Endothelial cell of umbilical vein (primary cell): ENCODE measurements at regions of chr17 and their contacts with region 1.

Region 1: GRCh38 chr17:75109407-75110233 is at the start of gene ARMC7:
- DNase-seq: peak; percentile 81
- H3K4me3 ChIP-seq: peak within 1 kb of the TSS; percentile 71 to 74 (median 73)
- H3K27ac ChIP-seq: no peak within 1 kb of the TSS
- H3K4me1 ChIP-seq: peaks cover 24% of the 10 kb centered on the region
- H3K27me3 ChIP-seq: no peaks in the 10 kb centered on the region
- CTCF ChIP-seq: no peak
- POLR2A ChIP-seq: peak; percentile 92
- total RNA-seq, gene ARMC7: 14.5 and 15.7 TPM in 2 replicates

Region 2: DNA sequence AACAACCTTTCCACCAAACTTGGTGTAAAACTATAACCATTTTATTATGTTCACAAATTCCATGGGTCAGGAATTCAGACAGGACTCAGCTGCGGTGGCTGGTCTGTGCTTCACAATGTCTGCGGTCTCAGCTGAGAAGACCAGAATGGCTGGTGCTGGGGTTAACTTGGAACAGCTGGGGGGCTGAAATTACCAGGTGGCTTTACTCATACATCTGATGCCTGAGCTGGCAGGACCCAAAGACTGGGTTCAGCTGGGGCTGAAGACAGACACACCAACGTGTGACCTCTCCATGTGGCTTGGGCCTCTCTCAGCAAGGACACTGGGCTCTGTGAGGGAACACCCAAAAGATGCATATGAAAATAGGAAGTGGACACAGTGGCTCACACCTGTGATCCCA is 131.4 kb before region 1 on chr17:
- CTCF ChIA-PET with region 1: no interaction called
- POLR2A ChIA-PET with region 1: no interaction called
- dilution Hi-C with region 1: no loop called
- intact Hi-C with region 1: no loop called
- DNase-seq: no peak
- H3K4me3 ChIP-seq: no peak overlapping the region
- H3K27ac ChIP-seq: no peak overlapping the region
- H3K4me1 ChIP-seq: peaks cover 11% of the 10 kb centered on the region
- H3K27me3 ChIP-seq: peaks cover 3 to 6% of the 10 kb centered on the region in 2 experiments
- CTCF ChIP-seq: no peak
- POLR2A ChIP-seq: no peak

Region 3: DNA sequence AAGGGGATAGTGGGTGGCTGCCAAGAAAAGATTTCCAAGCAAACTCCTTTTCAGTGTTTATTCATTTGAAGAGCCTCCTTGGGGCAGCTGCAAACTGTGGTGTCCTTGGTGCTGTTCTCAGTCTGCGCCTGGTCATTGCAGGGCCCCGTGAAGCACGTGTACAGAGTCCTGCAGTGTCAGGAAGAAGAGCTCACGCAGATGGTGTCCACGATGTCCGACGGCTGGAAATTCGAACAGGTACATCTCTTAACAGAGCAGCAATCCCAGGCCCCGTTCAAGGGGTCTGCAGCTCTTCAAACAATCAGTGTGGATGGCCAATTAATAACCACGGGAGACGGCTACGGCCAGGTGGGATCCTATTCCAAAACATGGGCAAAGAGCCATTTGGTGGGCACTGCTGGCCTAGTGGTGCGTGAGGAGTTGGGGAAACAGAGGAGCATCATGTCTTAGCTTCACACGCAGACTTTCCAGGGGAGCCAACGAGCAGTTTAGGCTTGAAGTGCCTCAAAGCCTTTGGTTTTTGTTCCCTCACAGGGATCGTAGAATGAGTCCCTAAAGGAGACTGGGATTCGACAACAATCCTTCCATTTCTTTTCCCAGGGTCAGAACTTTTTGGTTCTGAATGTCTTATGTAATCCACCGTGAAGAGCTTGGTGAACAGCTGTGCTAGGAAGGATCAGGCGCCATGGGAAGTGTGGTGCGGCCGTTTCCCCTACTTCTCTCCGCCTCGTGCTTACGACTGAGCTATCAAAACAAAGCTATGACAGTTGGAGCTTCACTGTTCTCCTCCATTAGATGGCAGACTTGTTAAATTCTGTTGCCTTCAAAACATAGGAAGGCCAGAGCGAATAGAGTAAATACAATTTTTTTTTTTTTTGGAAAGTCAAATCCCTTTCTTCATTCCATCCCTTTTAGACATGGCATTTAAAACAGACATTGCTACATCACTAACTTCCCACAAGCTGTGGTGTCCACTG is 50.0 kb before region 1 on chr17:
- CTCF ChIA-PET with region 1: interaction called, 80 read pairs
- POLR2A ChIA-PET with region 1: interaction called, 6 read pairs
- dilution Hi-C with region 1: no loop called
- intact Hi-C with region 1: no loop called
- DNase-seq: peak; percentile 77
- H3K4me3 ChIP-seq: no peak overlapping the region
- H3K27ac ChIP-seq: no peak overlapping the region
- H3K4me1 ChIP-seq: no peaks in the 10 kb centered on the region
- H3K27me3 ChIP-seq: no peaks in the 10 kb centered on the region
- CTCF ChIP-seq: peak; percentile 21 to 39
- POLR2A ChIP-seq: no peak

Region 4: DNA sequence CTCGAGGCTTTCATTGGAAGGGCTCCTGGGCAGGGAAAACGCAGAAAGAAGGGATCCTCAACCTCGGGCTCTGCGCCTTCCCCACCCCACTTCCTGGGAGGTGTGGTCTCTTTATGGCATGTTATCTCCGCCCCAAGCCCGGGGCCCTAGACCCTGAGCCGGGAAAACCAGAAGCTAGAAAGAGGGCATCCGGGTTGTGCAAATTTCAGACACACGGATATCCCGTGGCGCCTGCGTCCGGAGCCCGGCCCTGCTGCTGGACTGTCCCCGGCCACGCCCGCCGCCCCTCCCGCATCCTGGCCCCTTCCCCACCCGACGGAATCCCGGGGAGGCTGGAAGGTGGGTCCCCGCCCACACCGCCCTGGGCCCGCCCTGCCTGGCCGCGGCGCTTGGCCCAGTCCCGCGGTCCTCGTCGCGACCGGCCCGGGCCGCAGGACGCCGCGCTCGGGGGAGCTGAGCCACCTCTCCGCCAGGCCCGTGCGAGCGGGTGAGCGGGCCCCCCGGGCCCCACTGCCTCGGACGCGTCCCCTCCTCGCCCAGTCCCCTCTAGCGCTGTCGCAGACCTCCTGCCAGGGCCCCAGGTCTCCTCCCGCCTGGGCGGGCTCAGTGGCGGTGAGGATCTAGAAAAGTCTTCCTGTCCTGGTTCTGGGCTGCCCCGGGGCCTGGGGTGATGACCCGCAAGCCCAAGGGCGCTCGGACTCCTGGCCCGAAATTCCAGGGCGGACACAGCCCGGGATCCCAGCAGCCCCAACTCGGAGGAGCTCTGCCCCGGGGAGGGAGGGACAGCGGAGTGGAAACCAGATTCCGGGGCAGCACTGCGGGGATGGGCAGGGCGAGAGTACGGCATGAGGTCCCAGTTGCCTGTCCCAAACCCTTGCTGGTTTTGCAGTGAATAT is 21.8 kb before region 1 on chr17 and contains the start of gene SLC16A5:
- CTCF ChIA-PET with region 1: interaction called, 35 read pairs
- POLR2A ChIA-PET with region 1: interaction called, 3 read pairs
- dilution Hi-C with region 1: no loop called
- intact Hi-C with region 1: loop called (anchors 1 kb)
- DNase-seq: peak; percentile 81
- H3K4me3 ChIP-seq: peak within 1 kb of the TSS; percentile 23 to 52 (median 46)
- H3K27ac ChIP-seq: peak within 1 kb of the TSS; percentile 88
- H3K4me1 ChIP-seq: peaks cover 42% of the 10 kb centered on the region
- H3K27me3 ChIP-seq: no peaks in the 10 kb centered on the region
- CTCF ChIP-seq: no peak
- POLR2A ChIP-seq: peak; percentile 74
- total RNA-seq, gene SLC16A5: 16.4 and 17.4 TPM in 2 replicates

Region 5: GRCh38 chr17:75131280-75132017 is 21.8 kb after region 1 on chr17 and contains the start of gene NT5C:
- CTCF ChIA-PET with region 1: interaction called, 138 read pairs
- POLR2A ChIA-PET with region 1: interaction called, 5 read pairs
- dilution Hi-C with region 1: no loop called
- intact Hi-C with region 1: loop called (anchors 1 kb)
- DNase-seq: peak; percentile 73
- H3K4me3 ChIP-seq: peak within 1 kb of the TSS; percentile 47 to 53 (median 50)
- H3K27ac ChIP-seq: peak within 1 kb of the TSS; percentile 51
- H3K4me1 ChIP-seq: peaks cover 9% of the 10 kb centered on the region
- H3K27me3 ChIP-seq: no peaks in the 10 kb centered on the region
- CTCF ChIP-seq: peak; percentile 72
- POLR2A ChIP-seq: peak; percentile 83
- total RNA-seq, gene NT5C: 32.6 and 39.2 TPM in 2 replicates

Region 6: DNA sequence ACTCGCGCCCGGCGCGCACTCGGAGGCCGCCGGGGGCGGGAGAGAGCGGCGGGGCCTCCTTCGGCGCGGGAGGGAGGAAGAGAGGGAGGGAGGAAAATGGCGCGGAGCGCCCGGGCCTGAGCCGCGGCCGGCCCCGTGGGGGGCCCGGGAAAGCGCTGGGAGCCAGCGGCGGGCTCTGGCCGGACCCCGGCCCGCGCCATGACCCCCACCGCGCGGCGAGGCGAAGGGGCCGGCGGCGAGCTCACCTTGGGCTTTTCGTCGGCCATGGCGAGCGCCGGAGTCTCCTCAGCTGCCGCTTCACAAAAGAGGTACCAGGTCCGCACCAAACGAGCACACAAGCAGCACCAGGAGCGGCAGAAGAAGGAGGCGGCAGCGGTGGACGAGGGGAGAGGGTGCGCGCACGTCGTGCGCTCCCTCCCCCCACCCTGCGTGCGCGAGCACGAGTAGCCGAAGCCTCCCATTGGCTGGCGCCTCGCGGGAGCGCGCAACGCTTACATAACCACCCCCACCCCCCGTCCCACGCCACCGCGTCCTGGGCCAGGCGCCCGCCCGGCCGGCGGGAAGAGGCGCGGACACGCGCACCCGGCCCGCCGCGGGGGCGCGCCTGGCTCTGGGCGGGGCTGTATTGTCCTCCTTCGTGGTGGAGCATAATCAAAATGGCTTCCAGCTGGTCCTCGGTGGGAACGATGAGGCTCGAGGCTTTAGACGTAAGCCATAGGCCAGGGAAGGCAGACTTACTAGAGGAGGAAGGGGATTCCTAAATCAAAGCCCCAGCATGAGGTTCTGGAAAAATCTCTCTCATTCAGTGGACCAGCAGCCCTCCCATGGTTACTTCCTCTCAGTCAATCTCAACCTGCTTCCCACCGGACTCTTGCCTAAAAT is 73.2 kb after region 1 on chr17 and contains the start of gene SUMO2:
- CTCF ChIA-PET with region 1: interaction called, 11 read pairs
- POLR2A ChIA-PET with region 1: no interaction called
- dilution Hi-C with region 1: no loop called
- intact Hi-C with region 1: loop called (anchors 5 kb)
- DNase-seq: peak; percentile 96
- H3K4me3 ChIP-seq: peak within 1 kb of the TSS; percentile 69 to 95 (median 88)
- H3K27ac ChIP-seq: peak within 1 kb of the TSS; percentile 85
- H3K4me1 ChIP-seq: peaks cover 10% of the 10 kb centered on the region
- H3K27me3 ChIP-seq: no peaks in the 10 kb centered on the region
- CTCF ChIP-seq: peak in 1 of 2 donors; percentile 42
- POLR2A ChIP-seq: peak; percentile 73
- total RNA-seq, gene SUMO2: 424 and 437 TPM in 2 replicates

Region 7: GRCh38 chr17:75238684-75239191 is 129.1 kb after region 1 on chr17:
- CTCF ChIA-PET with region 1: interaction called, 62 read pairs
- POLR2A ChIA-PET with region 1: no interaction called
- dilution Hi-C with region 1: no loop called
- intact Hi-C with region 1: no loop called
- DNase-seq: peak; percentile 62
- H3K4me3 ChIP-seq: no peak overlapping the region
- H3K27ac ChIP-seq: no peak overlapping the region
- H3K4me1 ChIP-seq: no peaks in the 10 kb centered on the region
- H3K27me3 ChIP-seq: no peaks in the 10 kb centered on the region
- CTCF ChIP-seq: peak; percentile 86 to 92
- POLR2A ChIP-seq: no peak

Region 8: GRCh38 chr17:76737082-76737675 is 1627.6 kb after region 1 on chr17 and contains the start of gene SRSF2:
- CTCF ChIA-PET with region 1: no interaction called
- POLR2A ChIA-PET with region 1: no interaction called
- dilution Hi-C with region 1: no loop called
- intact Hi-C with region 1: no loop called
- DNase-seq: peak; percentile 99
- H3K4me3 ChIP-seq: peak within 1 kb of the TSS; percentile 82 to 96 (median 90)
- H3K27ac ChIP-seq: peak within 1 kb of the TSS; percentile 92
- H3K4me1 ChIP-seq: peaks cover 38% of the 10 kb centered on the region
- H3K27me3 ChIP-seq: no peaks in the 10 kb centered on the region
- CTCF ChIP-seq: no peak
- POLR2A ChIP-seq: peak; percentile 100
- total RNA-seq, gene SRSF2: 303 and 307 TPM in 2 replicates

Region 9: DNA sequence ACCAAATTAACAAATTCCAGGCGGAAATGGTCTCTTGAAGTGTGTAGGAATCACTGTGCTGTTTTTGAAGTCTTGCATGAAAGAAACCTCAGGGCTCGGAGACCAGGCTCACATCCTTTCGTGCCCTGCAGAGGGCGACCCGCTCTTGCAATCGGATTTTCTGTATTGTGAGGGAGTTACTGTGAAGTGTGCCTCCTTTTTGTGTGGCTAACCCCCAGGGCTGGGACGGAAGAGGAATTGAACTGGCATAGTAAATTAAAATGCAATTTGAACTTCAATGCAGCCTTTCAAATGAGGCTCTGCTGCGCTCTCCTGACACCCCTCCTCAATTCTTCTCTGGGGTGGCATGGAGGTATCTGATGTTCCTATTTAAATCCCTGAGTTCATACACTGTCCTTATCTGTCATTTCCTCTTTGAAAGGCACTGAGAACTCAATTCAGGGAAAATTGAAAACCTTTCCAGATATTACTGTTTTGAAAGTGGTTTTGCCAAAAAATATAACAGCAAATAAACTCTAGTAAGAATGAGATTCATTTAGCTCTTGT is 1707.0 kb after region 1 on chr17:
- CTCF ChIA-PET with region 1: no interaction called
- POLR2A ChIA-PET with region 1: no interaction called
- dilution Hi-C with region 1: no loop called
- intact Hi-C with region 1: no loop called
- DNase-seq: peak; percentile 41
- H3K4me3 ChIP-seq: no peak overlapping the region
- H3K27ac ChIP-seq: no peak overlapping the region
- H3K4me1 ChIP-seq: no peaks in the 10 kb centered on the region
- H3K27me3 ChIP-seq: peaks cover 0 to 3% of the 10 kb centered on the region in 2 experiments
- CTCF ChIP-seq: peak; percentile 57 to 73
- POLR2A ChIP-seq: no peak